Posterior vena cava (tissue), 2 donors: ENCODE measurements at regions of chr3 and their contacts with region 1.

Region 1: DNA sequence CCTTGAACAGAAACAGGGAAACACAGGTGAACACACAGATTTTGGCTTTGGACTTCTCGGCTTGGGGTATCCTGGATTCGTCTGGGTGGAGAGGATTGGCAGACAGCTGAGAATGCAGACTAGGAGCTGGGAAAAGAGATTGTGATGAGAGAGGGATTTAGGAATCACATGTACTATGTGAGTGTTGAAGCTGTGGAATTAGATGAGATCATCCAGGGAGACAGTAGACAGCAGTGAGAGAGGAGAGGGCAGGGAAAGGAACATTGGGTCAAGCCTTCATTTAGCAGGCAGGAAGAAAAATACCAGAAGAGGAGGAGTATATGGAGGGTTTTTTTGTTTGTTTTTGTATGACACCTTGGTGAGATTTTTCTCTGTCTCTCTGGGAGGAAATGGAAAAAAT is 262.1 kb upstream of the TBL1XR1 start:
- DNase-seq: no peak

Region 2: DNA sequence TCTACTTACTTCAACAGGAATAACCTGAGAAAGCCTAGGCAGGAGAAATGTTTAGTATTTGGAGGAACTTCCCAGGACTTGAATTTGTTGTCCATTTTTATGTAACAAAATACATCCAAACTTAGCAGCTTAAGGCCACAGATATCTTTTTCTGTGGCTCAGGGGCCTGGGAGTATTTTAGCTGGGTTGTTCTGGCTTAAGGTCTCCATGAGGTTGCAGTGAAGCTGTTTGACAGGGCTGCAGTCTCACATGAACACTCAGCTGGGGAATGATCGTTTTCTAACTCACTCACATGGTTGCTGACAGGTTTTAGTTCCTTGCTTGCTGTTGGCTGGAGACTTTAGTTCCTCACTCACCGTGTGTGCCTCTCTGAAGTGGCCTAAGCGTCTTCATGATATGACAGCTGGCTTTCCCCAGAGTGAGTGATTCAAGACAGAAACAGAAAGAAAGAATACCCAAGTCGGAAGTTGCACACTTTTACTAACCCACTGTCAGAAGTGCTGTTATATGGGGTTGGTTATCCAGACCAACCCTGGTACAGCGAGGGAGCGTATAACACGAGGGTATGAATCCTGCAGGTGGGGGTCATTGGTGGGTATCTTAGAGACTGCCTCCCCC is 32.4 kb before region 1 on chr3:
- intact Hi-C with region 1: loop called in 1 of 2 experiments (anchors 1 kb)
- DNase-seq: no peak

Region 3: GRCh38 chr3:177478170-177478860 is 18.9 kb after region 1 on chr3:
- intact Hi-C with region 1: no loop called
- DNase-seq: no peak